Dorsolateral prefrontal cortex (tissue), 120 donors: ENCODE measurements at regions of chr1 and their contacts with region 1.

Region 1: GRCh38 chr1:217004776-217005436 is 281.7 kb upstream of the ESRRG start:
- DNase-seq: no peak
- H3K4me3 ChIP-seq: no peak overlapping the region
- H3K27ac ChIP-seq: no peak overlapping the region
- H3K27me3 ChIP-seq: no peaks in the 10 kb centered on the region
- CTCF ChIP-seq: no peak

Region 2: DNA sequence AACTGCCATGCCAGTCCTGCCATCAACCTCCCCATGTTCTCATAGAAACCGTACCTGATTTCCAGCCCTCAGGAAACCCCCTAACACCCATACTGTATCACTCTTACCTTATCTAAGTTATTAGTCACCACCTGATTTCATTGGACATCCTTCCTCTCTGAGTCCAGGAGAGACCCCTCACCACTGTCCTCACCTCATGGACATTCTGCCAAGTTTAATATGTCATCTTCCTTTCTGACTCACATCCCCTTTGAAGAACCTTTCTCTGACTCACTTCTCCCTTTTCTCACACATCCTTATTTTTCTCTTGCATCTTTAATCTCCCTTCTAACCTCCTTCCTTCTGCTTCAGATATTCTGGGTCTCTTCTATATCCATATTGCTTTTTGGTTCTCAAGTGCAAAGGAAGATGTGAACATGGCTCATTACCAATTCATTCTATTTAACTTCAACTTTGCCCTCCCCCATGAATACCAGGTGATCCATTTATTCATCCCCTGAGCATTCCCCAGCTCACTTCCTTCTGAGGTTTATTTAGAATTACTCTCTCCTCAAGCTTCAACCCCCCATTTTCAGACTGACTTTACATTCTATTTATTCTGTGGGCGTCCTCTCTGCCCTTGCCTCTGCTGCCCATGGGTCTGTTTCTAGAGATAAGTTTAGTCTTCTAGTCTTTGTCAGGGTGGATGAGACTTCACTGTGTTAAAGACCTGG is 74.9 kb before region 1 on chr1:
- intact Hi-C with region 1: no loop called
- DNase-seq: no peak
- H3K4me3 ChIP-seq: no peak overlapping the region
- H3K27ac ChIP-seq: no peak overlapping the region
- H3K27me3 ChIP-seq: no peaks in the 10 kb centered on the region
- CTCF ChIP-seq: no peak

Region 3: GRCh38 chr1:217027403-217028080 is 22.6 kb after region 1 on chr1:
- intact Hi-C with region 1: no loop called
- DNase-seq: no peak
- H3K4me3 ChIP-seq: peak overlapping the region in 1 of 59 donors; percentile 13
- H3K27ac ChIP-seq: peak overlapping the region in 4 of 59 donors; percentile 3 to 45 (median 16)
- H3K27me3 ChIP-seq: no peaks in the 10 kb centered on the region
- CTCF ChIP-seq: no peak

Region 4: DNA sequence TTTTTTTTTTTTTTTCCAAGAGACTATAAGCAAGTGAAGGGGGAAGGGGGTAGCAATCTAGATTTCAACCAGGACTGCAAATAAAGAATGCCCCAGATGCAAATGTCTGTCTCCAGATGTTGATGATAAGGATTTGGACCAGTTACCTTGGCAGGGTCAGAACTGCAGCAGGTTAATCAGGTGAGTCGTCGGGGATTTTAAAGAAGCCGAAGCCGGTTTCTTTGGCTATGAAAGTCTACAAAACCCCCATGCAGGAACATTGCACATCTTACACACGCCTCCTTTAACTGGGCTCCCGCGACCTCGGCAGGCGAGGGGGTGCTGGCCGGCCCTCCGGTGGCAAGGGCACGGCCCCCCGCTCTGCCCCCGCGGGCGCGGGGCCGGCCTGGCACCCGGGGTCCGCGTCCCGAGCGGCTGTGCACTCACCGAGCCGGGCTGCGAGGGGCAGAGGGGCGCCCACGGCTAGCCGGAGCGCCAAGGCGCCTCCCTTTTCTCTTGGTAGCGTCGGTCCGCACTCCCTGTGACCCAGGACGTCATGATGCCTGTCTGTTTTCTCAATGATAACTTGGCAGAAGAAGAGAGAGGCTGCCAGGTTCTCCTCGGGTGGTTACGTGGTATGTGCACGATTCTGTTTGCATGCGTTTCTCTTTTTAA is 84.6 kb after region 1 on chr1:
- intact Hi-C with region 1: loop called in 1 of 2 experiments (anchors 5 kb)
- DNase-seq: peak in 8 of 10 donors; percentile 21 to 73 (median 52)
- H3K4me3 ChIP-seq: peak overlapping the region; percentile 48 to 89 (median 74)
- H3K27ac ChIP-seq: peak overlapping the region in 58 of 59 donors; percentile 2 to 91 (median 73)
- H3K27me3 ChIP-seq: no peaks in the 10 kb centered on the region
- CTCF ChIP-seq: peak in 3 of 56 donors; percentile 6 to 22 (median 15)

Region 5: DNA sequence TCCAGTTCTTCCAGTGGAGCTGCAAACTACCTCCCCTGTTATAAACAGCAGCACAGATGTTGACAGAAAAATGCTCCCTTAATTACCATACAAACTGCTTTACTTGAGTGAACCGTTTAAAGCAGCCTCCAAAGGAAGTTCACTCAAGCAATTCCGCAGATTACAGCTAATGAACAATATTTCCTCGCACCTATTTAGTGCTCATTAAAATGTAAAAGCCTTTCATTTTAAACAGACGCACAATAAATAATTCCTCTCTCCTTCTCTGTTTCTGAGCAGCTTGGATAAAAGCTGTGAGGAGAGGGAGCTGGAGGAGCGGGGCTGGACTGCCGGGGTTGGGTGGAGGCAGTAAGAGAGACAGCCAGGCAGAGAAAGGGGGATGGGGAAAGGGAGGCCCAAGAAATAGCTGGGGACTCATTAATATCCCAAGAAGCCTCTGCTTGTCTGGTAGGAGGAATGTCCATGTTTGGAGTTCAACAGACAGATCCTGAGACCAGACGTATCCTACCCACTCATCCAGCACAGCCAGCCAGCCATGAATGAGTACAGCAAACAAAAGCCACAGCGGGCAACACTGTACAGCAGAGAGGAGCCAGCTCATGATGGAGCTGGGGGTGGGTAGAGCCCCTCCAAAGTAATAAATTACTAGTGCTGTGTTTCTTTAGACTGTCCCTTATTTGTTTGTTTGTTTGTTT is 398.3 kb after region 1 on chr1:
- intact Hi-C with region 1: no loop called
- DNase-seq: no peak
- H3K4me3 ChIP-seq: no peak overlapping the region
- H3K27ac ChIP-seq: no peak overlapping the region
- H3K27me3 ChIP-seq: peaks cover 0 to 12% (median 0%) of the 10 kb centered on the region in 45 donors
- CTCF ChIP-seq: no peak